Mammary epithelial cell (primary cell): ENCODE measurements at regions of chr5 and their contacts with region 1.

Region 1: GRCh38 chr5:135999406-136000139 is 29.2 kb upstream of the TGFBI start:
- DNase-seq: peak; percentile 60
- H3K4me3 ChIP-seq: no peak overlapping the region
- H3K27ac ChIP-seq: no peak overlapping the region
- H3K4me1 ChIP-seq: peaks cover 8% of the 10 kb centered on the region
- H3K27me3 ChIP-seq: no peaks in the 10 kb centered on the region
- CTCF ChIP-seq: no peak

Region 2: GRCh38 chr5:135950611-135951010 is 49.0 kb before region 1 on chr5:
- CTCF ChIA-PET with region 1: no interaction called
- dilution Hi-C with region 1: no loop called
- in situ Hi-C with region 1: no loop called
- intact Hi-C with region 1: loop called (anchors 5 kb)
- DNase-seq: no peak
- H3K4me3 ChIP-seq: no peak overlapping the region
- H3K27ac ChIP-seq: no peak overlapping the region
- H3K4me1 ChIP-seq: no peaks in the 10 kb centered on the region
- H3K27me3 ChIP-seq: no peaks in the 10 kb centered on the region
- CTCF ChIP-seq: no peak